Activated CD4-positive, alpha-beta T cell treated with anti-CD3 and anti-CD28 coated beads, Interleukin-2, amount 10 ng/mL, durations not matched to agents 24 days and 14 days (primary cell): ENCODE measurements at regions of chr9 and their contacts with region 1.

Region 1: GRCh38 chr9:111916234-111916645 is 19.6 kb downstream of the UGCG start:
- DNase-seq: peak; percentile 74
- H3K4me3 Mint-ChIP-seq: peak overlapping the region; percentile 3
- H3K27ac Mint-ChIP-seq: peak overlapping the region; percentile 89
- H3K4me1 Mint-ChIP-seq: peaks cover 38% of the 10 kb centered on the region
- H3K27me3 Mint-ChIP-seq: no peaks in the 10 kb centered on the region

Region 2: DNA sequence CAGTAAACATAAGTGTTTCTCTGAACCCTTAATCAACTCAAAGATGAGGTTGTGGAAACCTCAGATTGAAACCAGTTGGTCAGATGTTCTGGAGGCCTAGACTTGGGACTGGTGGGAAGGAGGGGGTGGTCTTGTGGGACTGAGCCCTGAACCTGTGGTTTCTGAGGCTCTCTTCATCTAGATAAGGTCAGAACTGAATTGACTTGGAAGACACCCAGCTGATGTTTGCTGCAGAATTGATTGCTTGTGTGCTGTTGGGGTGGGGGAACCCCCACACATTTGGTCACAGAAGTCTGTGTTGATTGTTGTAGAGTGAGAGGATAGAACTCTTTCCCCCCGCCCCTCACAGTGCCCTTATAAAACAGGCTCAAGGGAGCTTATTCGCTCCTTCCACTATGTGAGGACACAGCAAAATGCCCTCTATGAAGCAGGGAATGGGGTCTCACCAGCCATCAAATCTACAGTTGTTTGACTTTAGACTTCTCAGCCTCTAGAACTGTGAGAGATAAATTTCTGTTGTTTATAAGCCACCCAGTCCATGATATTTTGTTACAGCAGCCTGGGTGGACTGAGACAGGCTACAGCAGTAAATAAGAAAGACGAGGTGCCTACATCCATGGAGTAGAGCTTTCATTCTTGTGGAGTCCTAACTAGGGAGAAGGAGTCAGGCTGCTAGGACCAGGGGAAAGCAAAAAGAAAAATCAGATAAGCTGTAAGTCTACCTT is 45.3 kb before region 1 on chr9:
- intact Hi-C with region 1: loop called (anchors 1 kb)
- DNase-seq: peak; percentile 57
- H3K4me3 Mint-ChIP-seq: no peak overlapping the region
- H3K27ac Mint-ChIP-seq: peak overlapping the region; percentile 66
- H3K4me1 Mint-ChIP-seq: peaks cover 12% of the 10 kb centered on the region
- H3K27me3 Mint-ChIP-seq: peaks cover 19% of the 10 kb centered on the region

Region 3: GRCh38 chr9:111957856-111958652 is 41.8 kb after region 1 on chr9:
- intact Hi-C with region 1: loop called (anchors 5 kb)
- DNase-seq: peak; percentile 72
- H3K4me3 Mint-ChIP-seq: peak overlapping the region; percentile 60
- H3K27ac Mint-ChIP-seq: no peak overlapping the region
- H3K4me1 Mint-ChIP-seq: peaks cover 14% of the 10 kb centered on the region
- H3K27me3 Mint-ChIP-seq: peaks cover 32% of the 10 kb centered on the region

Region 4: DNA sequence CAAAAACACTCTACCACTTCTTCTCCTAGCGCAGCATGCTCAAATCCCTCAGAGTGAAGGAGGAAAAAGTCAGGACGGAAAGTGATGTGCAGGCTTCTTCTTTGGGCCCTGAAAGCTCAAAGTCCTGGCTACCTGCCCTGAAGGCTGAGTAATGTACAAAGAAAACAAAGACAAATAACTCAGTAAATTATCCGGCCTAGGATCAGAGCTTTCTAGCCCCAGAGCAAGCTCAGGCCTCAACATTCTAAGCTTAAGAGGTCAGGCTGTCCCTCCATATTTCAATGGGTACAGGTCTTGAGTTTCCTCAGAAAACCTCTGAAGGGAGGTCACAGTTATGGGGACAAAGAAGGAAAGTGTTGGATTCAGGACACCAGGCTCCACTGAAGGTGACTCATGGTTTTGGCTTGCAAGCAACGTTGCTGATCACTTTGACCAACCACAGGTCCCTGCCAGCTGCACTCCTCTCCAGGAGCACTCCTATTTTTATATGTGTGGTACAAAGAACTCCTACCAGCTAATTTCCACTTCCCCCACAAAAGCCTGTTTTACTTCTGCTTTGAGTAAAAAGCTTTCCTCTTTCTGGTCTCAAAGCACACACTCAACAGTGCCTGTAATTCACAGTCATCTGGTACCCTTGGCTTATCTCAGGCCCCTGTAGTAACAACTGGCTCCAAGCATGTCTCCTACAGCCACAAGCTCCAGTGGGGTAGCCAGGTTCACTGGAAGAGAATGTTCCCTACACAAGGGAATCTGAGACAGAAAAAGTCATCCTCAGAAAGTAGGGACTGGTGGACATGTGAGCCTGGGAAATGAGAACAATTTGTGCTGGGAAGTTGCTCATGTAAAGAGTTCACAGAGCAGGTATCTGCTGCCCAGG is 96.0 kb after region 1 on chr9:
- intact Hi-C with region 1: loop called (anchors 1 kb)
- DNase-seq: no peak
- H3K4me3 Mint-ChIP-seq: peak overlapping the region; percentile 15
- H3K27ac Mint-ChIP-seq: peak overlapping the region; percentile 64
- H3K4me1 Mint-ChIP-seq: peaks cover 20% of the 10 kb centered on the region
- H3K27me3 Mint-ChIP-seq: peaks cover 36% of the 10 kb centered on the region

Region 5: GRCh38 chr9:112037281-112038016 is 121.2 kb after region 1 on chr9:
- intact Hi-C with region 1: loop called (anchors 1 kb)
- DNase-seq: peak; percentile 92
- H3K4me3 Mint-ChIP-seq: peak overlapping the region; percentile 52
- H3K27ac Mint-ChIP-seq: peak overlapping the region; percentile 88
- H3K4me1 Mint-ChIP-seq: peaks cover 45% of the 10 kb centered on the region
- H3K27me3 Mint-ChIP-seq: peaks cover 17% of the 10 kb centered on the region

Region 6: DNA sequence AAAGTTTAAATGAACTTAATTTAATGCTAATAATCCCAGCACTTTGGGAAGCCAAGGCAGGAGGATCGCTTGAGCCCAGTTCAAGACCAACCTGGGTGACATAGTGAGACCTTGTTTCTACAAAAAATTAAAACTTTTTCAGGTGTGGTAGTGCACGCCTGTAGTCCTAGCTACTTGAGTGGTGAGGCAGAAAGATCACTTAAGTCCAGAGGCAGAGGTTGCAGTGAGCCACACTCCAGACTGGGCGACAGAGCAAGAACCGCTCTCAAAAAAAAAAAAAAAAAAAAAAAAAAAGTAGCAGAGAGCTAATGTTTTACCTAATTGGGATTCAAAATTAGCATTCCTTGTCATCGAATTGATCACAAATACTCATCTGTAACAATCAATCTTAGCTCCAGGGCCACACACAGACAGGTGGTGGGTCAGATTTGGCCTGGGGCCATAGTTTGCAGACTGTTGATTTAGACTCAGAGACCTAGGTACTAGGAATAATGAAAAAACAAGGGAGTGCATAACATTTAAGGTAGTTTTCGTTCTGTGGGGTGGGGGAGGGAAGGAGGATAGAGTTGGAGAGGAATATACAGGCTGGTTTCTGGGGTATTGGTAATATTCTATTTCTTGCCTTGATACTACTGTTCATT is 485.1 kb after region 1 on chr9:
- intact Hi-C with region 1: no loop called
- DNase-seq: no peak
- H3K4me3 Mint-ChIP-seq: no peak overlapping the region
- H3K27ac Mint-ChIP-seq: no peak overlapping the region
- H3K4me1 Mint-ChIP-seq: no peaks in the 10 kb centered on the region
- H3K27me3 Mint-ChIP-seq: no peaks in the 10 kb centered on the region

Region 7: GRCh38 chr9:112750111-112750767 is 834.0 kb after region 1 on chr9 and contains the start of gene SNX30:
- intact Hi-C with region 1: loop called (anchors 5 kb)
- DNase-seq: peak; percentile 95
- H3K4me3 Mint-ChIP-seq: peak within 1 kb of the TSS; percentile 82
- H3K27ac Mint-ChIP-seq: peak within 1 kb of the TSS; percentile 86
- H3K4me1 Mint-ChIP-seq: peaks cover 51% of the 10 kb centered on the region
- H3K27me3 Mint-ChIP-seq: peaks cover 4% of the 10 kb centered on the region
- total RNA-seq, gene SNX30: 2.6 and 2.9 TPM in 2 replicates